Ovary (tissue), 10 donors: ENCODE measurements at regions of chr18 and their contacts with region 1.

Region 1: DNA sequence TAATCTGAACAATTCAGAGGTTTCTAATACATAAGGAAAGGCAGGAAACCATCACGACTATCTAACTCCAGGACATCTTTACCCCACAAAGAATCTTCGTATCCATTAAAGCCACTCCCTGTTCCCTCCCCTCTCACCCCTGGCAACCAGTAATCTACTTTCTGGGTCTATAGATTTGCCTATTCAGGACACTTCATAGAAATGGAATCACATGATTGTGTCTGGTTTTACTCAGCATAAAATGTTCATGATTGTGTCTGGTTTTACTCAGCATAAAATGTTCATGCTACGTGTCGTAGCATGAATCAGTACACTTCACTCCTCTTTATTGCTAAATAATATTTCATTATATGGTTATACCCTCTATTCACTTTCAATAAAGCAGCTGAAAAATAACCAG is 11.6 kb downstream of the FECH start:
- DNase-seq: no peak
- H3K4me3 ChIP-seq: no peak overlapping the region
- H3K27ac ChIP-seq: no peak overlapping the region
- H3K4me1 ChIP-seq: no peaks in the 10 kb centered on the region
- H3K27me3 ChIP-seq: no peaks in the 10 kb centered on the region
- CTCF ChIP-seq: no peak
- EP300 ChIP-seq: no peak
- POLR2A ChIP-seq: no peak

Region 2: GRCh38 chr18:57149531-57149930 is 425.3 kb before region 1 on chr18:
- intact Hi-C with region 1: loop called in 1 of 4 experiments (anchors 5 kb)
- DNase-seq: no peak
- H3K4me3 ChIP-seq: no peak overlapping the region
- H3K27ac ChIP-seq: no peak overlapping the region
- H3K4me1 ChIP-seq: no peaks in the 10 kb centered on the region
- H3K27me3 ChIP-seq: no peaks in the 10 kb centered on the region
- CTCF ChIP-seq: no peak
- EP300 ChIP-seq: no peak
- POLR2A ChIP-seq: no peak

Region 3: GRCh38 chr18:57705826-57706554 is 131.1 kb after region 1 on chr18:
- intact Hi-C with region 1: no loop called
- DNase-seq: no peak
- H3K4me3 ChIP-seq: no peak overlapping the region
- H3K27ac ChIP-seq: no peak overlapping the region
- H3K4me1 ChIP-seq: no peaks in the 10 kb centered on the region
- H3K27me3 ChIP-seq: no peaks in the 10 kb centered on the region
- CTCF ChIP-seq: no peak
- EP300 ChIP-seq: no peak
- POLR2A ChIP-seq: no peak

Region 4: DNA sequence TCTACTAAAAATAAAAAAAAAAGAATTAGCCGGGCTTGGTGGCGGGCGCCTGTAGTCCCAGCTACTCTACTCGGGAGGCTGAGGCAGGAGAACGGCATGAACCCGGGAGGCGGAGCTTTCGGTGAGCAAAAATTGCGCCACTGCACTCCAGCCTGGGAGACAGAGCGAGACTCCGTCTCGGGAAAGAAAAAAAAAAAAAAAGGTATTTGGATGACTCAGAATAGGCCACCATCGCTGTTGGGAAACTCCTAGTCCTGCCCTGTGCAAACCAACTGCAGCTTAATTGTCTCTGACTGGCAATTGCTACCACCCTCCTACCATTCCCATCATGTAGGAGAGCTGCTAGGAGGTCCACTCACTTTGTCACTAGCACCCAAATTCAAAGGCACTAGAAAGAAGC is 184.8 kb after region 1 on chr18:
- intact Hi-C with region 1: no loop called
- DNase-seq: no peak
- H3K4me3 ChIP-seq: no peak overlapping the region
- H3K27ac ChIP-seq: no peak overlapping the region
- H3K4me1 ChIP-seq: no peaks in the 10 kb centered on the region
- H3K27me3 ChIP-seq: no peaks in the 10 kb centered on the region
- CTCF ChIP-seq: no peak
- EP300 ChIP-seq: no peak
- POLR2A ChIP-seq: no peak